Activated CD4-positive, alpha-beta T cell treated with anti-CD3 and anti-CD28 coated beads for 36 hours (primary cell): ENCODE measurements at regions of chr4 and their contacts with region 1.

Region 1: DNA sequence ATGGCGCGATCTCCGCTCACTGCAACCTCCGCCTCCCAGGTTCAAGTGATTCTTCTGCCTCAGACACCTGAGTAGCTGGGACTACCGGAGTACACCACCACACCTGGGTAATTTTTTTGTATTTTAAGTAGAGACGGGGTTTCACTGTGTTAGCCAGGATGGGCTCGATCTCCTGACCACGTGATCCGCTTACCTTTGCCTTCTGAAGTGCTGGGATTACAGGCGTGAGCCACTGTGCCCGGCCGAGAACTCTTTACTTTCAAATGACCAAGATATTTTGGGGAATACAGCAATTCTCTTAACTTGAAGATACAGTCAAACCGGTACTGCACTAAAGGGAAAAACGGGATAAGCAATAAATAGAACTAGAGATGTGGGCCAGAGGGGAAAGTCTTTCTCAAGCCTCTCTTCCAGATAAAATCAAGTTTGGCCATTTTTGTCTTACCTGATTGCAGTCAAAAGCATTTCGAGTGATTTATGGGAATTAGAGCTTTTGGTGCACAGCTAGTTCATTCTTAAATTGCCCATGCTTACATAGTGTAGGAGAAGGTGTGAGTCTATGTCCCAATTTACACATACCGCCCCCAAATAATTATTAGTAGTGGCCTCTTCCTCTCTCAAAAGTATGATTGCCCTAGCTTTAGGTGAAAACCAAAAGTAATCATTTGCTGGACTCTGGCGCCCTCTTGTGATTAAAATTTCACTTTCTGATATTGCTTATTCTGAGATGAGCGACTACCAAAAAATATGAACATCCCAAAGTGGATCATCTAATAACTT is 53.2 kb upstream of the ABCG2 start:
- DNase-seq: peak; percentile 60
- ATAC-seq: no peak
- H3K4me3 Mint-ChIP-seq: no peak overlapping the region
- H3K27ac Mint-ChIP-seq: no peak overlapping the region
- H3K4me1 Mint-ChIP-seq: no peaks in the 10 kb centered on the region
- H3K27me3 Mint-ChIP-seq: peaks cover 2% of the 10 kb centered on the region

Region 2: GRCh38 chr4:87973283-87974169 is 238.1 kb before region 1 on chr4:
- CTCF ChIA-PET with region 1: interaction called, 12 read pairs
- POLR2A ChIA-PET with region 1: no interaction called
- intact Hi-C with region 1: loop called in 1 of 2 experiments (anchors 5 kb)
- DNase-seq: peak; percentile 63
- ATAC-seq: peak; percentile 69
- H3K4me3 Mint-ChIP-seq: no peak overlapping the region
- H3K27ac Mint-ChIP-seq: no peak overlapping the region
- H3K4me1 Mint-ChIP-seq: peaks cover 6% of the 10 kb centered on the region
- H3K27me3 Mint-ChIP-seq: peaks cover 33% of the 10 kb centered on the region

Region 3: GRCh38 chr4:88158489-88159243 is 53.0 kb before region 1 on chr4 and contains the start of gene ABCG2:
- CTCF ChIA-PET with region 1: no interaction called
- POLR2A ChIA-PET with region 1: no interaction called
- intact Hi-C with region 1: no loop called
- DNase-seq: peak; percentile 63
- ATAC-seq: peak; percentile 75
- H3K4me3 Mint-ChIP-seq: peak within 1 kb of the TSS; percentile 76
- H3K27ac Mint-ChIP-seq: peak within 1 kb of the TSS; percentile 81
- H3K4me1 Mint-ChIP-seq: peaks cover 18% of the 10 kb centered on the region
- H3K27me3 Mint-ChIP-seq: peaks cover 27% of the 10 kb centered on the region
- total RNA-seq, gene ABCG2: 0.33 to 0.39 TPM

Region 4: DNA sequence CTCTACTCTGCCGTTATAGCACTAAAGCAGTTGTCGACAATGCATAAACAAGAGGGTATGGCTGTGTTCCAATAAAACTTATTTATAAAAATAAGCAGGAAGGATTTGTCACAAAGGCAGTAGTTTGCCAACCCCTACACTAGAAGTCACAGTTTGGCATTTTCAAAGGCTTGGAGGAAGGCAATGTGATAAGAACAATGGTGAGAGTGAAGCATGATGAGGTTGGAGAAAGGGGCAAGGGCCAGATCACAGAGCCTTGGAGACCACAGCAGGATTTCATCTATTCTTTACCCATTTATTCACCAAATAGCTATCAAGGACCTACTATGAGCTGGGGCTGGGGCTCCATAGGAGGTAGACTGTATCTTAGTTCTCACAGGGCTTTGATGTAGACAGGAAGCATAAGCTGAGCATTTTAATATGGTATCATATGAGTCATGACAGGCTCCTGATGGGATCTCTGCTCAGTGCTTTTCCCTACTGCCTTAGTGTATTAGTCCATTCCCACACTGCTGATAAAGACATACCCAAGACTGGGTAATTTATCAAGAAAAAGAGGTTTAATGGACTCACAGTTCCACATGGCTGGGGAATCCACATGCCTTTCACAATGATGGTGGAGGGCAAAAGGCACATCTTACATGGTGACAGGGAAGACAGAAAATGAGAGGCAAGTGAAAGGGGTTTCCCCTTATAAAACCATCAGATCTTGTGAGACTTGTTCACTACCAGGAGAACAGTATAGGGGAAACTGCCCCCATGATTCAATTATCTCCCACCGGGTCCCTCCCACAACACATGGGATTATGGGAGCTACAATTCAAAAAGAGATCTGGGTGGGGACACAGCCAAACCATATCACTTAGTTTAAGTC is 13.8 kb after region 1 on chr4:
- CTCF ChIA-PET with region 1: interaction called, 11 read pairs
- POLR2A ChIA-PET with region 1: no interaction called
- intact Hi-C with region 1: no loop called
- DNase-seq: peak; percentile 12
- ATAC-seq: peak; percentile 88
- H3K4me3 Mint-ChIP-seq: no peak overlapping the region
- H3K27ac Mint-ChIP-seq: no peak overlapping the region
- H3K4me1 Mint-ChIP-seq: peaks cover 10% of the 10 kb centered on the region
- H3K27me3 Mint-ChIP-seq: no peaks in the 10 kb centered on the region

Region 5: DNA sequence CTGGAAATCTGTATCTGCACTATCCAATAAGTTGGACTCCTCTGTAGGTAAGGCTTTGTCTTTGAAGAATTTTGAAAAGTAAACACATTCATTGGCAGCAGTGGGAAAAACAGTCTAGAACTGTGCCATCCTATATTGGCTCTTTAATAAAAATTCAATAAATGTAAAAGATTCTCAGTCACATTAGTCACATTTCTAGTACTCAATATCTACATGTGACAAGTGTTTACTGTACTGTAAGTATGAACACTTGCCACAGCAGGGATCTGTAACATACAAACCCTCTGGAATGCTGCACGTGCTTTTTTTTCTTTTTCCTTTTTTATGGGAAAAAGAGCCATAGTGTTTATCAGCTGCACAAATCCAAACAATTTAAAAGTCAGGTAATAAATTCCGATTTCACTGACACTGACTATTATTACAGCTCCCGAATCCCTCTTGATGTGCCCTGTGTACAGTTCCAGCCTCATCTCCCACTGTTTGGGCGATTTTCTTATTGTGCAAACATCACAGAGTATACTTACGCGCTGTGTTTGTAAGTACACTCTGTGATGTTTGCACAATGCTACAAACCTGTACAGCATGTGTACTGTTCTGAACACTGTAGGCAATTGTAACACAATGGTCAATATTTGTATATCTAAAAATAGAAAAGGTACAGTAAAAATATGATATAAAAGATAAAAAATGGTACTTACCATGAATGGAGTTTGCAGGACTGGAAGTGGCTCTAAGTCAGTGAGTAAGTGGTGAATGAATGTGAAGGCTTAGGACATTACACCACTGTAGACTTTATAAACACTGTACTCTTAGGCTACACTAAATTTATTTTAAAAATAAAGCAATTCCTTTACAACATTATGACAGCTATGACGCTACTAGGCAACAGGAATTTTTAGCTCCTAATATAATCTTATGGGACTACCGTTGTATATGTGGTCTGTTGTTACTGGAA is 303.2 kb after region 1 on chr4:
- CTCF ChIA-PET with region 1: interaction called, 16 read pairs
- POLR2A ChIA-PET with region 1: no interaction called
- intact Hi-C with region 1: no loop called
- DNase-seq: no peak
- ATAC-seq: no peak
- H3K4me3 Mint-ChIP-seq: no peak overlapping the region
- H3K27ac Mint-ChIP-seq: no peak overlapping the region
- H3K4me1 Mint-ChIP-seq: peaks cover 2% of the 10 kb centered on the region
- H3K27me3 Mint-ChIP-seq: no peaks in the 10 kb centered on the region